SK-N-SH (cell line): ENCODE measurements at regions of chr7 and their contacts with region 1.

Region 1: GRCh38 chr7:136555933-136556332 is 312.5 kb upstream of the CHRM2 start:
- DNase-seq: peak; percentile 74
- H3K4me3 ChIP-seq: no peak overlapping the region
- H3K27ac ChIP-seq: peak overlapping the region in 1 of 2 experiments; percentile 60; a peak in 1 of 4 replicates
- H3K4me1 ChIP-seq: peaks cover 0 to 16% of the 10 kb centered on the region in 2 experiments; a peak in 2 of 4 replicates
- H3K27me3 ChIP-seq: no peaks in the 10 kb centered on the region
- CTCF ChIP-seq: no peak
- EP300 ChIP-seq: peak in 1 of 2 experiments; percentile 96; a peak in 2 of 4 replicates
- RAD21 ChIP-seq: peak; percentile 45

Region 2: DNA sequence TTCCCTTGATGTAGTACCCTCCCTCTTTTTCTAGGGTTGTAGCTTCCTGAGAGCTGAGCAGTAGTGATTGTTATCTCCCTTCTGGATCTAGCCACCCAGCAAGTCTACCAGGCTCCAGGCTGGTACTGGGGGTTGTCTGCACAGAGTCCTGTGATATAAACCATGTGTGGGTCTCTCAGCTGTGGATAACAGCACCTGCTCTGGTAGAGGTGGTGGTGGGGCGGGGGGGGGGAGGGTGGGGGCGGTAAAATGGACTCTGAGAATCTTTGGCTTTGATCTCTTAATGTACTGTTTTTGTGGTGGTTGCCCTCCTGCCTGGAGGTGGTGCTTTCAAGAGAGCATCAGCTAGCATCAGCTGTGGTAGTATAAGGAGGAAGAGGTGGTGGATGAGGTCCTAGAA is 10.6 kb after region 1 on chr7:
- CTCF ChIA-PET with region 1: interaction called, 18 read pairs
- POLR2A ChIA-PET with region 1: no interaction called
- DNase-seq: no peak
- H3K4me3 ChIP-seq: no peak overlapping the region
- H3K27ac ChIP-seq: no peak overlapping the region
- H3K4me1 ChIP-seq: peaks cover 0 to 4% of the 10 kb centered on the region in 2 experiments; a peak in 1 of 4 replicates
- H3K27me3 ChIP-seq: no peaks in the 10 kb centered on the region
- CTCF ChIP-seq: no peak
- EP300 ChIP-seq: no peak
- RAD21 ChIP-seq: no peak